ENCODE measurements at regions of chr3 and their contacts with region 1.

Region 1: DNA sequence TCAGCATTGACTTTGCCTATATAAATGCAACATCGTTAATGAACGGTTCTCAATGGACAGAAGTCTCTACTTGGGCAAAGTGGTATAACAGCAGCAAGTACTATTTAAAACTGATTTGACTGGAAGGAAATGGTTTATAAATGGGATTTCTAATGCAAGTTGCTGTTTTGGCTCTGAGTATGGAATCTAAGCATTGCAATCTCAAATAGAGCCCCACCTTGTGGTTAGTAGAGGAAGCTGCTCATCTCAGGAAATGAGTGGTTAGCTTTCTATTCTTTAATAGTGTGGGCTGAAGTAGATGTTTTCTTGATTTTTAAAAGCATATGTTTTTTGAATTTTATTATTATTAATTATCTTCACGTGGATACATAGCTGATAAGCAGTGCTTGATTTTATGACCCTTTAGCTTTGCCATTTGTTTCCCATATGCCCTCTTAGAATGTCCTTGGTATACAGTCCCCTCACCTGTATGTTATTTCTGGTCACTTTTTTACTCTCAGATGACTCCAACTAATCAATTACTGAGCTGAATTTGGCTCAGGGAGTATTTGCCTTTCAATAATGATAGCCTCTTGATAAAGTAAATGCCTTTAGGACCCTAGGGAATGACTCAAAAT is 67.1 kb downstream of the OXSM start:
- DNase-seq: no peak
- H3K4me3 ChIP-seq: no peak overlapping the region
- CTCF ChIP-seq: no peak
- POLR2A ChIP-seq: no peak

Region 2: GRCh38 chr3:24365194-24365612 is 1491.8 kb before region 1 on chr3:
- intact Hi-C with region 1: no loop called
- DNase-seq: peak in 1 of 2 donors; percentile 58
- H3K4me3 ChIP-seq: no peak overlapping the region
- CTCF ChIP-seq: no peak
- POLR2A ChIP-seq: no peak

Region 3: DNA sequence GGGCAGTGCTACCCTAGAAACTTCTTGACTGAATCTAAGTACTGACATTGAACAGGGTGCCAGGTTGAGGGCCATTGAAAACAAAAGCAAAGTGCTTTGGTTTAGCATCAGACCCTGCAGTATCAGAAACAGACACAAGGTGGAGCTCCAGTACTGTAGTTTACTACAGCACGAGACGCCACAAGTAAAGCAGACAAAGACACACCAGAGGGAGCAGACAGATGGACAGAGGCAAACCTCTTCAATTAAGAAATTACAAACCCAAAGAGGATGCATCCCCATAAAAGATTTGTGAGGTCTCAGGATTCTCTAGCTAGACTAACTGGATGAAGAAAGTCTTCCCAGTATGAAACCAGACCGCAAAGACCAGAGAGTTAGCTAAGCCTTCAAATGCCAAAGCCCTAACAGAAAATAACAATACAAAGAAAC is 208.9 kb before region 1 on chr3:
- intact Hi-C with region 1: loop called (anchors 5 kb)
- DNase-seq: peak; percentile 73 to 87
- H3K4me3 ChIP-seq: no peak overlapping the region
- CTCF ChIP-seq: no peak
- POLR2A ChIP-seq: no peak

Region 4: GRCh38 chr3:25817107-25817506 is 39.9 kb before region 1 on chr3:
- intact Hi-C with region 1: no loop called
- DNase-seq: no peak
- H3K4me3 ChIP-seq: no peak overlapping the region
- CTCF ChIP-seq: no peak
- POLR2A ChIP-seq: no peak

Region 5: DNA sequence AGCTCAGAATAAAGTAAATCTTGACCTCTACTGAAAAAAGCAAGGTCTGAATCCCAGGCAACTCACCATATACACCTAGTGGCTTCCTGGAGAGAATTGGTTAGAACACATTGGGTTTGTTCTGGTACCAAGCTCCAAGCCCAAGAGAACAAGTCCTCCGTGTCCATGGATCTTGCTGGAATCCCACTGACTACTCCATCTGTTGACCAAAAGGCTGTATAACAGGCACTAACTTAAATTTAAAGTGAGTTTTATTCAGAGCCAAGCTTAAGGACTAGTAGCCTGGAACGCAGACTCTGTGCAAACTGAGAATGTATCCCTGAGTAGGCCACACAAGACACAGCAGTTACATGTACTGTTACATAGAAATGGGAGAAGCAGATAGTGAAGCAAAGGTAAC is 423.5 kb after region 1 on chr3:
- intact Hi-C with region 1: no loop called
- DNase-seq: no peak
- H3K4me3 ChIP-seq: no peak overlapping the region
- CTCF ChIP-seq: no peak
- POLR2A ChIP-seq: no peak

Measured in lower leg skin (tissue), 4 donors.